ENCODE measurements at regions of chr3 and their contacts with region 1.

Region 1: DNA sequence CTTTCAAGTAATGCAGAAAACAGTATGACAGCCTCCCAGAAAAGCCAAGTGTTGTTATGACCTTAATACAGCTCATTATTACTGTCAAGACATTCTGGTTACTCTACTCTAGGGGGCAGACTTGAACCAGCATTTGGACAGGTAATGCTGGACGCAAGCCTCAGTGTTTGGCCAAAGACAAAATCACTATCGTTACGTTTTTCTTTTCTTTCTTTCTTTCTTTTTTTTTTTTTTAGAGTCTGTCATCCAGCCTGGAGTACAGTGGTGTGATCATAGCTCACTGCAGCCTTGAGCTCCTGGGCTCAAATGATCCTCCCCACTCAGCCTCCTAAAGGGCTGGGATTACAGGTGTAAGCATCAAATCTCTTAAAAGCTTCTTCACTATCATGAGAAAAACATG is 29.4 kb upstream of the TMEM45A start:
- DNase-seq: peak; percentile 54
- ATAC-seq: peak; percentile 94
- H3K4me3 ChIP-seq: no peak overlapping the region
- H3K27ac ChIP-seq: no peak overlapping the region
- H3K4me1 ChIP-seq: no peaks in the 10 kb centered on the region
- H3K27me3 ChIP-seq: no peaks in the 10 kb centered on the region
- CTCF ChIP-seq: peak; percentile 89
- EP300 ChIP-seq: no peak
- POLR2A ChIP-seq: no peak
- RAD21 ChIP-seq: peak; percentile 70

Region 2: DNA sequence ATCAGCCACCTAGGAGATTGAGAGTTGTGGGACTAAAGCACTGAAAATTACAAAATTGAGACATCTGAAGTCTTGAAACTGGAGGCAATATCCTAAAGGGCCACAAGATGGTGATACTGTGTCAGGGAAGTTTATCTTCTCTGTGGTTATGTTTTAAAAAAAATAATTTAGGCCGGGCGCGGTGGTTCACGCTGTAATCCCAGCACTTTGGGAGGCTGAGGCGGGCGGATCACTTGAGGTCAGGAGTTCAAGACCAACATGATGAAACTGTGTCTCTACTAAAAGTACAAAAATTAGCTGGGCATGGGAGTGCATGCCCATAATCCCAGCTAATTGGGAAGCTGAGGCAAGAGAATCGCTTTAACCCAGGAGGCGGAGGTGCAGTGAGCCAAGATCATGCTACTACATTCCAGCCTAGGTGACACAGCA is 146.3 kb before region 1 on chr3:
- CTCF ChIA-PET with region 1: no interaction called
- POLR2A ChIA-PET with region 1: no interaction called
- in situ Hi-C with region 1: no loop called
- intact Hi-C with region 1: loop called (anchors 2 kb)
- DNase-seq: peak; percentile 39
- ATAC-seq: peak; percentile 72
- H3K4me3 ChIP-seq: no peak overlapping the region
- H3K27ac ChIP-seq: no peak overlapping the region
- H3K4me1 ChIP-seq: no peaks in the 10 kb centered on the region
- H3K27me3 ChIP-seq: no peaks in the 10 kb centered on the region
- CTCF ChIP-seq: peak; percentile 63
- EP300 ChIP-seq: no peak
- POLR2A ChIP-seq: no peak
- RAD21 ChIP-seq: peak; percentile 48; the same call in 1 of the 2 replicates

Region 3: DNA sequence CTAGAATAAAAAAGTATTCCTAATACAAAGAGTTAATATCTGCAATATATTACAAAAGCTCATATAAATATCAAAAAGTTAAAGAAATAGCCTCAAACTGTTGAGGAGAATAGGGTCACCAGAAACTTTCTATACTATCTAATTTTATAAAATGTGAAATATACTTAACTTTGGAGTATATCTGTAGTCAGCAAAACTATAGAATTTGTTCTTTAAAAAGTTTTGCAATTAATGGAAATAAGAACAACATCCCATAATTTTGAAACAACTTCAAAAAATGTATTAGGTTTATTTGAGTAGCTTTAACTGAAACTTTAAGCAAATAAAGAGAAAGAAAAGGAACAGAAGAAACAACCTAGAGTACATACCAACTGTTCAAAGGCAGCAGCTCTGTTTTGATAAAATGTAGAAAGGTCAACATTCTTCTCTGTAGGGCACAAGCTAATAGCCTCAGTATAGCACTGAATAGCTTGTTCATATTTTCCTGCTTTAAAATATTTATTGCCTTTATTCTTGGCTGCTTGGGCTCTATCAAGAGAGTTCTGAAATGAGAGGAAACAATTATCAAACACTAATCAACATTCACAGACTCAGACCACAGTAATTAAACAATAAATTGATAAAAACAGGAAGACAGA is 76.4 kb before region 1 on chr3:
- CTCF ChIA-PET with region 1: no interaction called
- POLR2A ChIA-PET with region 1: no interaction called
- in situ Hi-C with region 1: no loop called
- intact Hi-C with region 1: no loop called
- DNase-seq: peak; percentile 73
- ATAC-seq: peak; percentile 99
- H3K4me3 ChIP-seq: peak overlapping the region in 1 of 3 experiments; percentile 23; a peak in 3 of 6 replicates
- H3K27ac ChIP-seq: peak overlapping the region; percentile 68
- H3K4me1 ChIP-seq: peaks cover 37% of the 10 kb centered on the region
- H3K27me3 ChIP-seq: no peaks in the 10 kb centered on the region
- CTCF ChIP-seq: no peak
- EP300 ChIP-seq: peak in 1 of 2 experiments; percentile 67; a peak in 2 of 4 replicates
- POLR2A ChIP-seq: no peak
- RAD21 ChIP-seq: no peak

Region 4: GRCh38 chr3:100590114-100590839 is 127.3 kb after region 1 on chr3:
- CTCF ChIA-PET with region 1: interaction called, 28 read pairs
- POLR2A ChIA-PET with region 1: no interaction called
- in situ Hi-C with region 1: loop called (anchors 5 kb)
- intact Hi-C with region 1: loop called (anchors 1 kb)
- DNase-seq: peak; percentile 66
- ATAC-seq: peak; percentile 90
- H3K4me3 ChIP-seq: no peak overlapping the region
- H3K27ac ChIP-seq: no peak overlapping the region
- H3K4me1 ChIP-seq: peaks cover 15% of the 10 kb centered on the region
- H3K27me3 ChIP-seq: peaks cover 0 to 1% of the 10 kb centered on the region in 2 experiments; a peak in 1 of 5 replicates
- CTCF ChIP-seq: peak; percentile 83
- EP300 ChIP-seq: no peak
- POLR2A ChIP-seq: no peak
- RAD21 ChIP-seq: peak; percentile 61

Region 5: GRCh38 chr3:100708967-100709841 is 246.2 kb after region 1 on chr3 and contains the start of gene TFG:
- CTCF ChIA-PET with region 1: no interaction called
- POLR2A ChIA-PET with region 1: no interaction called
- in situ Hi-C with region 1: loop called (anchors 25 kb)
- intact Hi-C with region 1: no loop called
- DNase-seq: peak; percentile 97
- ATAC-seq: peak; percentile 98
- H3K4me3 ChIP-seq: peak within 1 kb of the TSS; percentile 68 to 91 (median 82)
- H3K27ac ChIP-seq: peak within 1 kb of the TSS; percentile 95
- H3K4me1 ChIP-seq: peaks cover 39% of the 10 kb centered on the region
- H3K27me3 ChIP-seq: no peaks in the 10 kb centered on the region; a peak in 1 of 5 replicates
- CTCF ChIP-seq: no peak
- EP300 ChIP-seq: peak in 1 of 2 experiments; percentile 14; a peak in 1 of 4 replicates
- POLR2A ChIP-seq: peak; percentile 63 to 64; a peak in 3 of 4 replicates
- RAD21 ChIP-seq: 0 out of 2 replicates have a peak, but pooled peaks have one; percentile 10
- total RNA-seq, gene TFG: 53.6 and 75.5 TPM in 2 replicates

Region 6: GRCh38 chr3:101195951-101196713 is 733.1 kb after region 1 on chr3:
- CTCF ChIA-PET with region 1: no interaction called
- POLR2A ChIA-PET with region 1: no interaction called
- in situ Hi-C with region 1: no loop called
- intact Hi-C with region 1: loop called (anchors 5 kb)
- DNase-seq: peak; percentile 20
- ATAC-seq: peak; percentile 62
- H3K4me3 ChIP-seq: no peak overlapping the region
- H3K27ac ChIP-seq: no peak overlapping the region
- H3K4me1 ChIP-seq: no peaks in the 10 kb centered on the region
- H3K27me3 ChIP-seq: 0 out of 5 replicates have a peak, but pooled peaks cover 0 to 1% of the 10 kb centered on the region in 2 experiments
- CTCF ChIP-seq: peak; percentile 53
- EP300 ChIP-seq: no peak
- POLR2A ChIP-seq: no peak
- RAD21 ChIP-seq: no peak

Measured in HepG2 (cell line).